Aorta (tissue), 5 donors: ENCODE measurements at regions of chr2 and their contacts with region 1.

Region 1: GRCh38 chr2:64144057-64145013 is at the start of gene PELI1:
- DNase-seq: peak; percentile 96 to 99
- ATAC-seq: peak; percentile 100
- H3K4me3 ChIP-seq: peak within 1 kb of the TSS; percentile 83 to 98
- H3K27ac ChIP-seq: peak within 1 kb of the TSS; percentile 95 to 99
- H3K4me1 ChIP-seq: no peaks in the 10 kb centered on the region
- H3K27me3 ChIP-seq: no peaks in the 10 kb centered on the region
- total RNA-seq, gene PELI1: 36.7 to 38.0 TPM

Region 2: GRCh38 chr2:64062829-64063228 is 81.5 kb before region 1 on chr2:
- intact Hi-C with region 1: loop called in 1 of 2 experiments (anchors 5 kb)
- DNase-seq: no peak
- ATAC-seq: no peak
- H3K4me3 ChIP-seq: no peak overlapping the region
- H3K27ac ChIP-seq: no peak overlapping the region
- H3K4me1 ChIP-seq: no peaks in the 10 kb centered on the region
- H3K27me3 ChIP-seq: no peaks in the 10 kb centered on the region